ENCODE measurements at regions of chr22 and their contacts with region 1.

Region 1: DNA sequence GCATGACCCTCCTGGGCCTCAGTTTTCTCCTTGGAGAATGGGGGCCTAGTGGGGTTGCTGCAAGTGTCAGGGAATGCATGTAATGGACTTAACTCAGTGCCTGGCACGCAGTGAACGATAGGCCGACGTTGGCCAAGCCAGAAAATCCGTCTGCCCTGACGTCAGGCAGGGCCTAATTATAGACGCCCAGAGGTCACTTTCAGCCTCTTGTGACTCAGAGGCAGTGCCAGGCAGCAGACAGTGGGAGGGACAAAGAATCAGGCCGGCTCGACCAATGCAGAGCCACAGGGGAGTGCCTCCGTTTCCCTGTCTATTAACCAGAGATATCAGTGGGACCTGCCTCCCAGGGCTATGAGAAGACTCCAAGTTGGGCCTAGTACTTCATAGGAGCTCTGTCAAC is 115.0 kb downstream of the MN1 start:
- DNase-seq: peak; percentile 51 to 79
- H3K4me3 ChIP-seq: no peak overlapping the region
- H3K27ac ChIP-seq: peak overlapping the region; percentile 13; the same call in 1 of the 2 replicates
- H3K4me1 ChIP-seq: peaks cover 20% of the 10 kb centered on the region
- H3K27me3 ChIP-seq: no peaks in the 10 kb centered on the region
- CTCF ChIP-seq: no peak

Region 2: GRCh38 chr22:26679003-26679629 is 1007.4 kb before region 1 on chr22:
- CTCF ChIA-PET with region 1: no interaction called
- POLR2A ChIA-PET with region 1: interaction called, 14 read pairs
- intact Hi-C with region 1: no loop called
- DNase-seq: peak; percentile 57 to 60
- H3K4me3 ChIP-seq: no peak overlapping the region
- H3K27ac ChIP-seq: no peak overlapping the region
- H3K4me1 ChIP-seq: peaks cover 8% of the 10 kb centered on the region
- H3K27me3 ChIP-seq: no peaks in the 10 kb centered on the region
- CTCF ChIP-seq: peak; percentile 90

Region 3: GRCh38 chr22:27438271-27438980 is 248.1 kb before region 1 on chr22:
- CTCF ChIA-PET with region 1: no interaction called
- POLR2A ChIA-PET with region 1: no interaction called
- intact Hi-C with region 1: no loop called
- DNase-seq: peak in 1 of 2 experiments; percentile 27
- H3K4me3 ChIP-seq: no peak overlapping the region
- H3K27ac ChIP-seq: no peak overlapping the region
- H3K4me1 ChIP-seq: peaks cover 10% of the 10 kb centered on the region
- H3K27me3 ChIP-seq: no peaks in the 10 kb centered on the region
- CTCF ChIP-seq: no peak

Region 4: GRCh38 chr22:27518531-27519340 is 167.8 kb before region 1 on chr22:
- CTCF ChIA-PET with region 1: no interaction called
- POLR2A ChIA-PET with region 1: no interaction called
- intact Hi-C with region 1: no loop called
- DNase-seq: no peak
- H3K4me3 ChIP-seq: no peak overlapping the region
- H3K27ac ChIP-seq: no peak overlapping the region
- H3K4me1 ChIP-seq: no peaks in the 10 kb centered on the region
- H3K27me3 ChIP-seq: no peaks in the 10 kb centered on the region
- CTCF ChIP-seq: no peak

Region 5: GRCh38 chr22:27715106-27715505 is 28.6 kb after region 1 on chr22:
- CTCF ChIA-PET with region 1: no interaction called
- POLR2A ChIA-PET with region 1: no interaction called
- intact Hi-C with region 1: no loop called
- DNase-seq: no peak
- H3K4me3 ChIP-seq: no peak overlapping the region
- H3K27ac ChIP-seq: no peak overlapping the region
- H3K4me1 ChIP-seq: peaks cover 22% of the 10 kb centered on the region
- H3K27me3 ChIP-seq: no peaks in the 10 kb centered on the region
- CTCF ChIP-seq: no peak

Region 6: DNA sequence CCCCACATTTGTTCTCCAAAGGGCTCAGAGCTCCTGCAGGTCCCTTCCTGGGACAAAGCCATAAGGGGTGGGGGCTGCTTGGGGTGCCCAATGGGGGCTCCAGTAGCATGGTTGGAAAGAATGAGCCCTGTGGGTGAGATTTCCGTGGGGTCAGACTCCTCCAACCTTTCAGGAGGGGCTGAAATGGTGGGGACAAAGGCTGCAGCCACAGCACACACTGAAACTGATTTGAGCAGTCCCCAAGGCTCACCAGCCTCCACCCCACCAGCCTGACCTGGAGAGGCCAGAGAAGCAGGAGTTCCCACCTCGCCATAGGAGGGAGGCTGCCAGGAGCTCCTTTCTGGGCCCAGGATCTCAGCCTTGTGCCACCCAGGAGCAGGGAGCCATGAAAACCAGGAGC is 45.9 kb after region 1 on chr22:
- CTCF ChIA-PET with region 1: no interaction called
- POLR2A ChIA-PET with region 1: no interaction called
- intact Hi-C with region 1: no loop called
- DNase-seq: no peak
- H3K4me3 ChIP-seq: no peak overlapping the region
- H3K27ac ChIP-seq: no peak overlapping the region
- H3K4me1 ChIP-seq: peaks cover 14% of the 10 kb centered on the region
- H3K27me3 ChIP-seq: no peaks in the 10 kb centered on the region
- CTCF ChIP-seq: no peak

Measured in PC-9 (cell line).